HEK293 (cell line): ENCODE measurements at regions of chr19 and their contacts with region 1.

Region 1: GRCh38 chr19:41263850-41264580 is at the start of gene HNRNPUL1:
- H3K4me3 ChIP-seq: peak within 1 kb of the TSS; percentile 85
- H3K27ac ChIP-seq: peak within 1 kb of the TSS; percentile 100
- H3K4me1 ChIP-seq: peaks cover 14% of the 10 kb centered on the region
- CTCF ChIP-seq: peak; percentile 89

Region 2: DNA sequence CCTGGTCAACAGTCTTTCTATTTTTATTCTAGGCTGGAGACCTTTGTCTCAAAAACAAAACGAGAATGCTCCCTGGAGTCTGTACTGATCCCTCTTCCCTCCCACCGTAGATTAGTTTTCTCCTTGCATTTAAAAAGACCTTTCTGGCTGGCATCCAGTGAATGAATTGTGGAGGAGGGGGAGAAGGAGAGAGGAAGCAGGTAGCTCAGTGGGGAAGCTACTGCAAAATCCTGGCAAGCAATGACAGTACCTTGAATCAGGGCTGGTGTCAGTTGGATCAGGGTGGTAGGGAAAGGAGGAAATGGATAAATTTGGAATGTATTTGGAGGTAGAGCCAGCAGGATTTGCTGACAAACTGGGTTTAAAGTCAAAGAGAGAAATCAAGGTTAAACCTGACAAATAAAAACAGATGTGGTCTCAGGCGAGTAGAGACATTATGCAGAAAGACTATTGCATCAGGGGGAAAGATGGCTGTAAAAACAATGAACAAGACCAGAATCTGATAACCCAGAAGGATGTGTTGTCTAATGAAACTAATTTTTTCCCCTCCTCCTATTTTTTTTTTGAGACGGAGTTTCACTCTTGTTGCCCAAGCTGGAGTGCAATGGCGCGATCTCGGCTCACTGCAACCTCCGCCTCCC is 74.5 kb before region 1 on chr19:
- CTCF ChIA-PET with region 1: interaction called, 9 read pairs
- POLR2A ChIA-PET with region 1: interaction called, 12 read pairs
- H3K4me3 ChIP-seq: no peak overlapping the region
- H3K27ac ChIP-seq: peak overlapping the region; percentile 4; the same call in 1 of the 2 replicates
- H3K4me1 ChIP-seq: peaks cover 21% of the 10 kb centered on the region
- CTCF ChIP-seq: no peak

Region 3: DNA sequence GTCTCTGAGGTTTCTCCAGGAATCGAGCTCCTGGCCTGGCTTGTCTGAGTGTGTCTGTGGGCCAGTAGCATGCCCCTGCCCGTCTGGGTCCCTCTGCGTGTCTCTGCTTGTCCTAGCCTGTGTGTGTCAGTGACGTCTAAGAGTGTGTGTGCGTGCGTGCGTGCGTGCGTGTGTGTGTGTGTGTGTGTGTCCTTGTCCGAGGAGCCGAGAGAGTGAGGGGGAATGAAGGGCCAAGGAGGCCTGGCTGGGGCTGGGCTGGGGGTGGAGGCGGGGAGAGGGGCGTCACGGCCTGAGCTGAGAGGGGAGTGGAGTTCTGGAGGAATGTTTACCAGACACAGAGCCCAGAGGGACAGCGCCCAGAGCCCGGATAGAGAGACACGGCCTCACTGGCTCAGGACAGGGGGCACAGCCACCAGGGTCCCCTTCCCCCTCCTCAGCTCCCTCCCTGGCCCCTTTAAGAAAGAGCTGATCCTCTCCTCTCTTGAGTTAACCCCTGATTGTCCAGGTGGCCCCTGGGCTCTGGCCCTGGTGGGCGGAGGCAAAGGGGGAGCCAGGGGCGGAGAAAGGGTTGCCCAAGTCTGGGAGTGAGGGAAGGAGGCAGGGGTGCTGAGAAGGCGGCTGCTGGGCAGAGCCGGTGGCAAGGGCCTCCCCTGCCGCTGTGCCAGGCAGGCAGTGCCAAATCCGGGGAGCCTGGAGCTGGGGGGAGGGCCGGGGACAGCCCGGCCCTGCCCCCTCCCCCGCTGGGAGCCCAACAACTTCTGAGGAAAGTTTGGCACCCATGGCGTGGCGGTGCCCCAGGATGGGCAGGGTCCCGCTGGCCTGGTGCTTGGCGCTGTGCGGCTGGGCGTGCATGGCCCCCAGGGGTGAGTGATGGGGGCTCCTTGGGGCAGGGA is 45.2 kb before region 1 on chr19 and contains the start of gene AXL:
- CTCF ChIA-PET with region 1: interaction called, 10 read pairs
- POLR2A ChIA-PET with region 1: interaction called, 14 read pairs
- H3K4me3 ChIP-seq: no peak within 1 kb of the TSS
- H3K27ac ChIP-seq: no peak within 1 kb of the TSS
- H3K4me1 ChIP-seq: no peaks in the 10 kb centered on the region; the same call in 1 of the 2 replicates
- CTCF ChIP-seq: no peak

Region 4: DNA sequence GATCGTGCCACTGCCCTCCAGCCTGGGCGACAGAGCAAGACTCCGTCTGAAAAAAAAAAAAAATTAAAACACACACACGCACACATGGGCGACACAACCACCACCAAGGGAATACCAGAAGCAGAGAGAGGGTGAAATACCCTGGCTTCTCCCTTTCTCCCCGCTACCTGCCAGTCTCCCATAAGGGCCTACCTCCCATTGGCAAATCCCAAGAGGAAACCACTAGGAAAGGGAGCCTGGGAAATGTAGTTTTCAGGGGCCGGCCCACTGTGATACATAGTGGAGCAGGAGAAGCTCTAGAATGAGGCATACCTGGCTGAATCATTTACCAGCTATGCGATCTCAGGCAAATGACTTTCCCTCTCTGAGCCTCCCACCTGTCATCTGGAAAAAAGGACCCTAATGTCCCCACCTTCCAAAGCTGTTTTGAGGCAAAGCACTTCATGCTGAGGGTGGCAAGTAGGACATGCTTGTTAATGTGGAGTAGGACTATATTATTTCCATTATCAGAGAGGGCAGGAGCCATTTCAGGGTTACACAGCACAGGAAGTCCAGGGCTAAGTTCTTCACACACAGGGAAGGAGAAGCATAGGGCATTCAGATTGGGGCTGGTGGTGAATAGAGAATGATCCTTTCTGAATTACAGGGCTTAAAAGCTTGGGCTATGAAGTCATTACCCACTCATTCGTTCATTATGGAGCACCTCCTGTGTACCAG is 14.2 kb before region 1 on chr19:
- CTCF ChIA-PET with region 1: interaction called, 13 read pairs
- POLR2A ChIA-PET with region 1: interaction called, 6 read pairs
- H3K4me3 ChIP-seq: no peak overlapping the region
- H3K27ac ChIP-seq: no peak overlapping the region
- H3K4me1 ChIP-seq: no peaks in the 10 kb centered on the region
- CTCF ChIP-seq: no peak

Region 5: GRCh38 chr19:41321600-41322270 is 57.7 kb after region 1 on chr19:
- CTCF ChIA-PET with region 1: interaction called, 3 read pairs
- POLR2A ChIA-PET with region 1: interaction called, 10 read pairs
- H3K4me3 ChIP-seq: no peak overlapping the region
- H3K27ac ChIP-seq: no peak overlapping the region
- H3K4me1 ChIP-seq: peaks cover 22% of the 10 kb centered on the region
- CTCF ChIP-seq: peak; percentile 76

Region 6: DNA sequence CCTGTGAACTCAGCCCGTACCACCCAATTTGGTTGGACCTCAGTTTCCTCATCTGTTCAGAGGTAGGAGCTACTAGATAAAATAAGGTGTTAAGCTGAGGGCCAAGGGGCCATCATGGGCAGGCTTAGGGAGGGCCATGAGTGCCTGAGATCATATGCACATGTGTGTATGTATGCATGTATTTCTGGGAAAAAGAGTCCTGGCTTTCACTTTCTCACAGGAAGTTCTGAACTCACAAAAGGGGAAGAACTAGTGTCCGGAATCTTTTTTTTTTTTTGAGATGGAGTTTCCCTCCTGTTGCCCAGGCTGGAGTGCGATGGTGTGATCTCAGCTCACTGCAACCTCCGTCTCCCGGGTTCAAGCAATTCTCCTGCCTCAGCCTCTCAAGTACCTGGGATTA is 70.8 kb after region 1 on chr19:
- CTCF ChIA-PET with region 1: no interaction called
- POLR2A ChIA-PET with region 1: no interaction called
- H3K4me3 ChIP-seq: no peak overlapping the region
- H3K27ac ChIP-seq: no peak overlapping the region
- H3K4me1 ChIP-seq: no peaks in the 10 kb centered on the region
- CTCF ChIP-seq: no peak

Region 7: DNA sequence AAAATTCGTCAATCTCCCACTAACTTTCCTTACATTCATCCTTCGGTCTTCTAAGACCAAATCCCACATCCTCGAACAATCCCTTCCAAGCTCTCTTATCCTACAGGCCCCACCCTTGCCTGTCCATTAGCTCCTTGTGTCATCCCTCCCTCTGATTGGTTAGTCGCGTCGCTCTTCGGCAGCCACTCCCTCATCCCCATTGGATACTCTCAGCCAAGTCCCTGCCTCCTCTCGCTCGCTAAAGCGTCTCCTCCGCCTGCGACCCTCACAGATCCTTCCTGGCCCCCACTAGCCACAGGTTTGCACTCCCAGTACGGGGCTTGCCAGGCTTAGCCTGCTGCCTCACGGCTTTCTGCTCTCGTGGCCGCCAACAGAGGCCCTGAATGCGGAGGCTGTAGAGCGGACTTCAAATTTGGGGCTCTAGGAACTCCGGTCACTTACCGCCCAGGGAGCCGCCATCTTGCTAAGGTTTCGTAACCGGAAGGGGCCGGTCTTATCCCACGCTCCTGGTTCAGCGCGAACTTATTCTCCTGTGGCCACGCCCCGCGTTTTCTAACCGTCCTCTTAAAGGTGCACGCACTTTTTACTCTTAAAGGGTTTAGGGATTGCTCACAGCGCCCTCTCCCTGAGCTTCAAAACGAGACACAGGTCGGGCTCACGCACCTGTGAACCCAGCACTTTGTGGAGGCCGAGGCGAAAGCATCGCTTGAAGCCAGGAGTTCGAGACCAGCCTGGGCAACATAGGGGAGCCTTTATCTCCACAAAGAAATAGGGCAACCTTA is 175.6 kb after region 1 on chr19 and contains the start of gene DMAC2:
- CTCF ChIA-PET with region 1: no interaction called
- POLR2A ChIA-PET with region 1: interaction called, 12 read pairs
- H3K4me3 ChIP-seq: peak within 1 kb of the TSS; percentile 90
- H3K27ac ChIP-seq: peak within 1 kb of the TSS; percentile 70
- H3K4me1 ChIP-seq: peaks cover 4% of the 10 kb centered on the region; the same call in 1 of the 2 replicates
- CTCF ChIP-seq: peak; percentile 63; the same call in 1 of the 2 replicates